MCF 10A (cell line): ENCODE measurements at regions of chr21 and their contacts with region 1.

Region 1: GRCh38 chr21:37267269-37268184 is at the start of gene VPS26C:
- DNase-seq: peak; percentile 99
- H3K4me3 Mint-ChIP-seq: peak within 1 kb of the TSS; percentile 94
- H3K27ac Mint-ChIP-seq: peak within 1 kb of the TSS; percentile 100
- H3K4me1 Mint-ChIP-seq: peaks cover 10% of the 10 kb centered on the region
- H3K27me3 Mint-ChIP-seq: no peaks in the 10 kb centered on the region
- CTCF ChIP-seq: no peak
- total RNA-seq, gene VPS26C: 38.5 and 61.6 TPM in 2 replicates

Region 2: GRCh38 chr21:37338671-37339551 is 71.4 kb after region 1 on chr21:
- CTCF ChIA-PET with region 1: no interaction called
- POLR2A ChIA-PET with region 1: interaction called, 54 read pairs
- intact Hi-C with region 1: loop called (anchors 2 kb)
- DNase-seq: peak; percentile 96
- H3K4me3 Mint-ChIP-seq: peak overlapping the region; percentile 42
- H3K27ac Mint-ChIP-seq: peak overlapping the region; percentile 97
- H3K4me1 Mint-ChIP-seq: peaks cover 25% of the 10 kb centered on the region
- H3K27me3 Mint-ChIP-seq: no peaks in the 10 kb centered on the region
- CTCF ChIP-seq: no peak

Region 3: DNA sequence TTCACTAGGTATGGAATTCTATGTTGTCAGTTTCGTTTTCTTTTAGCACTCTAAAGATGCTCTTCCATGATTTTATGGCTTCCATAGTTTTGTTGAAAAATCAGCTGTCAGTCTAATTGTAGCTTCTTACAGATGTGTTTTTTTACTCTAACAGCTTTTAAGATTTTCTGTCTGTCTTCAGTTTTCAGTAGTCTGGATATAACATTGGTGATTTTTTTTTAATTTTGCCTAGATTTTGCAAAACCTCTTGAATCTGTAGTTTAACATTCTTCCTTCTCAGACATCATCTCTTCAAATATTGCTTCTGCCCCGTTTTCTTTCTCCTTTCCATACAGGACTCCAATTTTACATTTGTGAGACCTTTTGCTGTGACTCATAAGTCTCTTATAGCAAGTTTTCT is 81.1 kb after region 1 on chr21:
- CTCF ChIA-PET with region 1: no interaction called
- POLR2A ChIA-PET with region 1: interaction called, 16 read pairs
- intact Hi-C with region 1: no loop called
- DNase-seq: peak; percentile 18
- H3K4me3 Mint-ChIP-seq: no peak overlapping the region
- H3K27ac Mint-ChIP-seq: no peak overlapping the region
- H3K4me1 Mint-ChIP-seq: no peaks in the 10 kb centered on the region
- H3K27me3 Mint-ChIP-seq: no peaks in the 10 kb centered on the region
- CTCF ChIP-seq: no peak

Region 4: GRCh38 chr21:37374027-37374426 is 106.5 kb after region 1 on chr21:
- CTCF ChIA-PET with region 1: interaction called, 6 read pairs
- POLR2A ChIA-PET with region 1: interaction called, 101 read pairs
- intact Hi-C with region 1: no loop called
- DNase-seq: peak; percentile 47
- H3K4me3 Mint-ChIP-seq: no peak overlapping the region
- H3K27ac Mint-ChIP-seq: peak overlapping the region; percentile 70
- H3K4me1 Mint-ChIP-seq: peaks cover 67% of the 10 kb centered on the region
- H3K27me3 Mint-ChIP-seq: no peaks in the 10 kb centered on the region
- CTCF ChIP-seq: no peak

Region 5: DNA sequence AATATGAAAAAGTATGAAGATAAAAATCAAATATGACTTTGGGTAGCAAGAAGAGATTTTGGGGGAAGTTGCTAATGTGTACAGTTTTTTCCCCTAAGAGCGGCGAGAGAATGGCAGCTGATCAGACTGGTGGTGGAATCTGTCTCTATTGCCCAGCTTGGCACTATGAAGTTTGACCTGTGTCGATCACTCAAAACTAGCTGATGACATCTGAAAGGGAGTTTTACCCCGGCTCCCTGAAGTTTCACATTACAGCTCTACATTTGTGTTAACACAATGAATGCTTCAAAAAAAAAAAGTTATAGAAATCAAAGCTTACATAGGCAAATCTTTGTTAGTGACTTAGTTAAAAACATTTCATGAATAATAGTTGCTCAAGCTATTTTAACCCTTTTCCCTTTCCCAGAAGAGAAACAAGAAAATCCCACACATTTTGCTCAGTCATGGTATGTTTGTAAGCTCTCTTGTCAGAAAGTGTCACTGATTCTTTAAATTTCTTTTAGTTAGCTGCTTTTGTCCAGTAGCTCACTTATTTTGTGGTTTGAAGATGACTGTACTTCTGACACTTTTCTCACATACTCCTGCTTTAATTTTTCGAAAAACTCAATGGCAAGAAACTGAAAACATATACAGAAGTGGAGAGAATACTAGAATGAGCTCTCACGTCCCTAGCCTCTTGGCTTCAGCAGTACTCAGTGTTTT is 140.3 kb after region 1 on chr21:
- CTCF ChIA-PET with region 1: no interaction called
- POLR2A ChIA-PET with region 1: interaction called, 13 read pairs
- intact Hi-C with region 1: no loop called
- DNase-seq: no peak
- H3K4me3 Mint-ChIP-seq: no peak overlapping the region
- H3K27ac Mint-ChIP-seq: peak overlapping the region; percentile 58
- H3K4me1 Mint-ChIP-seq: peaks cover 42% of the 10 kb centered on the region
- H3K27me3 Mint-ChIP-seq: no peaks in the 10 kb centered on the region
- CTCF ChIP-seq: no peak